ENCODE measurements at regions of chr2 and their contacts with region 1.

Region 1: GRCh38 chr2:223970343-223971128 is 13.3 kb downstream of the MRPL44 start:
- DNase-seq: peak; percentile 48
- H3K4me3 ChIP-seq: no peak overlapping the region; a peak in 1 of 4 replicates
- H3K27ac ChIP-seq: peak overlapping the region in 1 of 2 experiments; percentile 15; a peak in 1 of 4 replicates
- H3K4me1 ChIP-seq: peaks cover 0 to 11% of the 10 kb centered on the region in 2 experiments; a peak in 1 of 4 replicates
- H3K27me3 ChIP-seq: no peaks in the 10 kb centered on the region
- CTCF ChIP-seq: peak; percentile 98
- EP300 ChIP-seq: no peak
- RAD21 ChIP-seq: peak; percentile 92

Region 2: GRCh38 chr2:223860809-223861738 is 109.5 kb before region 1 on chr2:
- CTCF ChIA-PET with region 1: no interaction called
- POLR2A ChIA-PET with region 1: no interaction called
- DNase-seq: no peak
- H3K4me3 ChIP-seq: no peak overlapping the region
- H3K27ac ChIP-seq: peak overlapping the region in 1 of 2 experiments; percentile 20; a peak in 2 of 4 replicates
- H3K4me1 ChIP-seq: peaks cover 0 to 6% of the 10 kb centered on the region in 2 experiments; a peak in 1 of 4 replicates
- H3K27me3 ChIP-seq: no peaks in the 10 kb centered on the region
- CTCF ChIP-seq: 0 out of 2 replicates have a peak, but pooled peaks have one; percentile 16
- EP300 ChIP-seq: no peak
- RAD21 ChIP-seq: no peak

Region 3: GRCh38 chr2:223920113-223920512 is 50.4 kb before region 1 on chr2:
- CTCF ChIA-PET with region 1: no interaction called
- POLR2A ChIA-PET with region 1: no interaction called
- DNase-seq: no peak
- H3K4me3 ChIP-seq: no peak overlapping the region
- H3K27ac ChIP-seq: no peak overlapping the region
- H3K4me1 ChIP-seq: no peaks in the 10 kb centered on the region
- H3K27me3 ChIP-seq: no peaks in the 10 kb centered on the region
- CTCF ChIP-seq: peak; percentile 14; the same call in 1 of the 2 replicates
- EP300 ChIP-seq: no peak
- RAD21 ChIP-seq: no peak

Region 4: GRCh38 chr2:223957092-223957851 is 13.3 kb before region 1 on chr2 and contains the start of gene MRPL44:
- CTCF ChIA-PET with region 1: interaction called, 34 read pairs
- POLR2A ChIA-PET with region 1: interaction called, 6 read pairs
- DNase-seq: peak; percentile 93
- H3K4me3 ChIP-seq: peak within 1 kb of the TSS; percentile 93 to 97
- H3K27ac ChIP-seq: peak within 1 kb of the TSS; percentile 74 to 89
- H3K4me1 ChIP-seq: peaks cover 4 to 27% of the 10 kb centered on the region in 2 experiments; a peak in 3 of 4 replicates
- H3K27me3 ChIP-seq: no peaks in the 10 kb centered on the region
- CTCF ChIP-seq: no peak
- EP300 ChIP-seq: peak; percentile 34 to 53; a peak in 2 of 4 replicates
- RAD21 ChIP-seq: no peak
- polyA plus RNA-seq, gene MRPL44: 12.9 and 14.5 TPM in 2 replicates

Region 5: DNA sequence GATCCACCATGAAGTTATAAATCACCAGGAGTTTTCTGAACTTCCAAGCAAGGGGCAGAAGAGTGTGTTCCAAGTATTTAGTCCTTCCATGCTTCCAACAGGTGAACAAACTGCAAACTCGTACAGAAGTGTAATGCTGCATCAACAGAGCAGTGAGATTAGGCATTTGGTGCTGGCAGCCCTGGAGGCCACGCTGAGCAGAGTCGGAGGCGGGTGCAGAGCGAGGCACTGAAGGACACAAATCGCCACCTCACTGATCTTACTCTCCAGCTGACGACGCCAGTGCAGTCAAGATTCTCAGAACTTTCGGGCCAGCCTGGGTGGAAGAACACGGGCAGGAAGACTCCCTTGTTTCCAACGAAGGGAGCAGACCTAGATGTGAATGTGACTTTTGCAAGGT is 29.3 kb after region 1 on chr2:
- CTCF ChIA-PET with region 1: interaction called, 255 read pairs
- POLR2A ChIA-PET with region 1: no interaction called
- DNase-seq: no peak
- H3K4me3 ChIP-seq: no peak overlapping the region
- H3K27ac ChIP-seq: no peak overlapping the region
- H3K4me1 ChIP-seq: peaks cover 0 to 7% of the 10 kb centered on the region in 2 experiments; a peak in 2 of 4 replicates
- H3K27me3 ChIP-seq: no peaks in the 10 kb centered on the region
- CTCF ChIP-seq: no peak
- EP300 ChIP-seq: no peak
- RAD21 ChIP-seq: no peak

Region 6: DNA sequence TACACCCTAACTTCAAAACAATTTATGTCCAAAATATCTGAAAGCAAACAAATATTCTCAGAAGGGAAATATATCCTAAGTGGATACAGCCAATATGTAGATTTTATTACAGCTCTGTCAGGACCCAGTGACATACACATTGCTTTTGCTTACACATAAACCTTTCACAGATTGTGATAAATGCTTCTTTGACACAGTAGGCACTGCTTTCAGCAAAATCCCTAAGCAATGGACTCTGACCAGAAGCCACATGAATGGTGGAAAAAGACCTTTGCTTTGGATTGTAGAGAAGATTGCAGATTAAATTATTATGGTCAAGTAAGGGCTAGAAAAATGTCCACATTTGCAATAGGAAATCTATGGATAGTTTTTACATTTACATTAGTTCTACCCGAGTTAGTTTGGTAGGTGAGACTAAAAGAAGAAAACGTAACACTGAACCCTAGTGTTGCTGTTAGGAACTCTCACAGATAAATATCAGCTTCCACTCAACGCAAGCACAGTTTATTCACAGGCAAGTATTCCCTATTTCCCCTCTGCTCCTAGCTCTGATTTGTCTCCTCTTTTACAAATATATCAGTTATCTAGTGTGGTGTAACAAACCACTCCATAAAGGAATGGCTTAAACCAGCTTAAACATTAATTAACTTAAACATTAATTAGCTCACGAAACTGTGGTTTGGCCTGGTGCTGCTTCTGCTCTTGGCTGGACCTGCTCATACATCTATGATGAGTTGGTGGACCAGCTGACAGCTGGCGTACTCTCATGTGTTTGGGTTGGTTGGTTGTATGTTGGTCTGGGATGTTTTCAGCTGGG is 92.2 kb after region 1 on chr2:
- CTCF ChIA-PET with region 1: interaction called, 13 read pairs
- POLR2A ChIA-PET with region 1: no interaction called
- DNase-seq: no peak
- H3K4me3 ChIP-seq: no peak overlapping the region
- H3K27ac ChIP-seq: no peak overlapping the region
- H3K4me1 ChIP-seq: no peaks in the 10 kb centered on the region; a peak in 1 of 4 replicates
- H3K27me3 ChIP-seq: no peaks in the 10 kb centered on the region
- CTCF ChIP-seq: no peak
- EP300 ChIP-seq: no peak
- RAD21 ChIP-seq: peak; percentile 34; the same call in 1 of the 2 replicates

Region 7: GRCh38 chr2:224284134-224284946 is 313.8 kb after region 1 on chr2:
- CTCF ChIA-PET with region 1: interaction called, 288 read pairs
- POLR2A ChIA-PET with region 1: no interaction called
- DNase-seq: peak; percentile 12
- H3K4me3 ChIP-seq: no peak overlapping the region; a peak in 1 of 4 replicates
- H3K27ac ChIP-seq: no peak overlapping the region
- H3K4me1 ChIP-seq: peaks cover 0 to 2% of the 10 kb centered on the region in 2 experiments; a peak in 1 of 4 replicates
- H3K27me3 ChIP-seq: no peaks in the 10 kb centered on the region
- CTCF ChIP-seq: peak; percentile 93
- EP300 ChIP-seq: no peak
- RAD21 ChIP-seq: peak; percentile 79

Region 8: DNA sequence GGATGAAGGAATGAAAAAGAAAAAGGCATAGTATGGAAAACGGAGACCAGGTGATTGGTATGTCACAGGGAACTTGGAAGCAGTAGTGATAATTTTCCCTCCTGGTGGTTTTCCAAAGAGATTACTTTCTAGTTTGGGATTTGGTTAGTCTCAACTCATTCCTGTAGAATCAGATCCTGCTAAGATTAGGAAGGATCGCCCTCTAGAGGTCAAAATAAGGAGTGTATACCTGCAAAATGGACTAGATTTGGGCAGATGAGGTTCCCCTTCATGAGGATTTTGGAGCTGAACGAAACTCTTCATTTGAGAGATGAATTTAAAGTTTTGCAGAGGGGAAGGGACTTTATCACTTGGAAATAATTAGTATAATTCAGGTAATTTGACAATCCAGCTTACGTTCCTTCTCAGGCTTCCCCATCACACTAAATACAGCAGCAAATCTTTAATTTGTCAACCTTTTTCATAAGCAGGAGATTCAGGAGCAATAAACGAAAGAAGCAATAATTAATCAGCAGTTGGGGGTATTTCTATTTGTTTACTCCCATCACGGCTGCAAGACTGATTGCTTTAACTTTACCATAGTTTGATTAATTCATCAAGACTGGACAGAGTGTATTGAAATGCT is 680.4 kb after region 1 on chr2:
- CTCF ChIA-PET with region 1: interaction called, 11 read pairs
- POLR2A ChIA-PET with region 1: no interaction called
- DNase-seq: peak; percentile 72
- H3K4me3 ChIP-seq: no peak overlapping the region; a peak in 1 of 4 replicates
- H3K27ac ChIP-seq: no peak overlapping the region
- H3K4me1 ChIP-seq: no peaks in the 10 kb centered on the region
- H3K27me3 ChIP-seq: no peaks in the 10 kb centered on the region
- CTCF ChIP-seq: peak; percentile 91
- EP300 ChIP-seq: no peak
- RAD21 ChIP-seq: peak; percentile 91